HepG2 (cell line): ENCODE measurements at regions of chr9 and their contacts with region 1.

Region 1: GRCh38 chr9:114155263-114155972 is at the start of gene COL27A1:
- DNase-seq: peak; percentile 70
- ATAC-seq: peak; percentile 68
- H3K4me3 ChIP-seq: peak within 1 kb of the TSS; percentile 78 to 100 (median 94)
- H3K27ac ChIP-seq: peak within 1 kb of the TSS; percentile 80
- H3K4me1 ChIP-seq: peaks cover 58% of the 10 kb centered on the region
- H3K27me3 ChIP-seq: peaks cover 0 to 4% of the 10 kb centered on the region in 2 experiments; a peak in 1 of 5 replicates
- CTCF ChIP-seq: peak; percentile 95
- EP300 ChIP-seq: no peak
- POLR2A ChIP-seq: no peak
- RAD21 ChIP-seq: peak; percentile 88
- total RNA-seq, gene COL27A1: 13.1 and 71.3 TPM in 2 replicates

Region 2: GRCh38 chr9:114098016-114098935 is 57.1 kb before region 1 on chr9:
- CTCF ChIA-PET with region 1: no interaction called
- POLR2A ChIA-PET with region 1: interaction called, 14 read pairs
- in situ Hi-C with region 1: no loop called
- intact Hi-C with region 1: no loop called
- DNase-seq: no peak
- ATAC-seq: peak; percentile 43
- H3K4me3 ChIP-seq: peak overlapping the region; percentile 45 to 67 (median 49); a peak in 5 of 6 replicates
- H3K27ac ChIP-seq: peak overlapping the region; percentile 55
- H3K4me1 ChIP-seq: peaks cover 53% of the 10 kb centered on the region
- H3K27me3 ChIP-seq: no peaks in the 10 kb centered on the region
- CTCF ChIP-seq: no peak
- EP300 ChIP-seq: no peak
- POLR2A ChIP-seq: no peak
- RAD21 ChIP-seq: no peak

Region 3: GRCh38 chr9:114117996-114118830 is 37.2 kb before region 1 on chr9:
- CTCF ChIA-PET with region 1: no interaction called
- POLR2A ChIA-PET with region 1: interaction called, 107 read pairs
- in situ Hi-C with region 1: no loop called
- intact Hi-C with region 1: loop called (anchors 1 kb)
- DNase-seq: peak; percentile 99
- ATAC-seq: peak; percentile 81
- H3K4me3 ChIP-seq: peak overlapping the region; percentile 27 to 64 (median 48); a peak in 5 of 6 replicates
- H3K27ac ChIP-seq: peak overlapping the region; percentile 87
- H3K4me1 ChIP-seq: peaks cover 93% of the 10 kb centered on the region
- H3K27me3 ChIP-seq: no peaks in the 10 kb centered on the region
- CTCF ChIP-seq: no peak; the same call in 1 of the 2 replicates
- EP300 ChIP-seq: peak in 1 of 2 experiments; percentile 93; a peak in 2 of 4 replicates
- POLR2A ChIP-seq: peak in 1 of 2 experiments; percentile 59; a peak in 2 of 4 replicates
- RAD21 ChIP-seq: 0 out of 2 replicates have a peak, but pooled peaks have one; percentile 18

Region 4: DNA sequence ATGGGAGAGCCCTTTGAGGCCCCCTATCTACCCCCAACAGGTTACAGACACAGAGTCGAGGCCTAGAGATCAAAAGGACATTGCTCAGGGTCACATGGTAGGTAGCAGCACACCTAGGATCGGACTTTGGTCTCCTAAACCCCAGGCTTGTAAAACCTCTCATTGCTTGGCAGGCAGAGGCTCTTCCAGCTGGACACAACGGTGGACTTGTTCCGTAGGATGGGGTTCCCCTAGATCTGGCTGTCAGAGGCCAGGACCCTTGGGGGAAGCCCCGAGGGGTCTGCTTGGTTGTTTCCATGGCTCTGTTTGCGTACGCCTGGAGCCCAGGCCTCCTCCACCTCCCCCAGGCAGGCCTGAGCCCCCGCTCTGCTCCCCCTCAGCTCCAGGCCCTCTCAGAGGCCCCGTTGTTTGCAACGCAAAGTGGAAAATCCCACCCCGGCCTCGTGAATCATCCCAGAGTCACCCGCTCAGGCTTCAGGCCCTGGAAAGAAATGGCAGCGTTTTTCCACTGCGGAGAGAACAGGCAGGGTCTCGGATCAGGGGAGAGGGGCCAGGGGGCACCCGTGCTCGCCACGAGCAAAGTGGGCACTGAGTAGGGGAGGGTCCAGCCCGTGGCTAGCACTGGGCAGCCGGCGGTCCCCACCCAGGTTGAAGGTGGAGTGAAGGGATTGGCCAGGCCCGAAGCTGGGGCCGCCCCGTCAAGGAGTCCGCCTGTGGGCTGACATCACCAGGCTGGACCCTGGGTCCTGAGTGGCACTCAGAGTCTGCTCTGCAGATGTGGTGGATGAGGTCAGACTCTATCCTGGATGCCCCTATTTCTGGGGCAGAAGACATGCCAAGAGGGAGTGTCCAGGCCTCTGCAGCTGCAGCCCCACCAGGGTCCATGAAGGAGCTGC is 19.7 kb after region 1 on chr9:
- CTCF ChIA-PET with region 1: no interaction called
- POLR2A ChIA-PET with region 1: interaction called, 252 read pairs
- in situ Hi-C with region 1: no loop called
- intact Hi-C with region 1: loop called (anchors 1 kb)
- DNase-seq: peak; percentile 99
- ATAC-seq: peak; percentile 82
- H3K4me3 ChIP-seq: peak overlapping the region in 2 of 3 experiments; percentile 21 to 53; a peak in 3 of 6 replicates
- H3K27ac ChIP-seq: peak overlapping the region; percentile 98
- H3K4me1 ChIP-seq: peaks cover 70% of the 10 kb centered on the region
- H3K27me3 ChIP-seq: no peaks in the 10 kb centered on the region
- CTCF ChIP-seq: peak; percentile 44
- EP300 ChIP-seq: peak; percentile 66 to 77; a peak in 3 of 4 replicates
- POLR2A ChIP-seq: peak; percentile 78 to 80
- RAD21 ChIP-seq: peak; percentile 5; the same call in 1 of the 2 replicates

Region 5: DNA sequence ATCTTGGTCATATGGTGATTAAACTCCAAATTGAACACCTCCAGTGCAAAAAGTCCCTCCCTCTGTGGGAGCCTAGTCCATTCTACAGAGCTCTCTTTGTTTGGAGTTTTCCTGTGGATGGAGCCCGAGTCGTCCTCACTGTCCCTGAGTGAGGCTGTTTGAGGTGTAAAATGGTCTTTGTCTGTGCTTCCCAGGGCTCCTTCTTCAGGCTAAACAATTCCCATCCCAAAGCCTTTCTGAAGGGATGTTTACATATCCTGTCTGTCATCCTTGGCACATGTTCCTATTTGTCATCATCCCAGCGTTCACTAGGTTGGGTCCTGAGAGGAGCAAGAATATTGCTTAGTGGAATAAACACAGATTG is 68.8 kb after region 1 on chr9:
- CTCF ChIA-PET with region 1: no interaction called
- POLR2A ChIA-PET with region 1: no interaction called
- in situ Hi-C with region 1: no loop called
- intact Hi-C with region 1: loop called (anchors 5 kb)
- DNase-seq: peak; percentile 53
- ATAC-seq: peak; percentile 19; the same call in 2 of the 3 replicates
- H3K4me3 ChIP-seq: no peak overlapping the region
- H3K27ac ChIP-seq: peak overlapping the region; percentile 36
- H3K4me1 ChIP-seq: peaks cover 19% of the 10 kb centered on the region
- H3K27me3 ChIP-seq: no peaks in the 10 kb centered on the region
- CTCF ChIP-seq: no peak
- EP300 ChIP-seq: no peak
- POLR2A ChIP-seq: no peak
- RAD21 ChIP-seq: no peak